T-cell (primary cell): ENCODE measurements at regions of chr5 and their contacts with region 1.

Region 1: DNA sequence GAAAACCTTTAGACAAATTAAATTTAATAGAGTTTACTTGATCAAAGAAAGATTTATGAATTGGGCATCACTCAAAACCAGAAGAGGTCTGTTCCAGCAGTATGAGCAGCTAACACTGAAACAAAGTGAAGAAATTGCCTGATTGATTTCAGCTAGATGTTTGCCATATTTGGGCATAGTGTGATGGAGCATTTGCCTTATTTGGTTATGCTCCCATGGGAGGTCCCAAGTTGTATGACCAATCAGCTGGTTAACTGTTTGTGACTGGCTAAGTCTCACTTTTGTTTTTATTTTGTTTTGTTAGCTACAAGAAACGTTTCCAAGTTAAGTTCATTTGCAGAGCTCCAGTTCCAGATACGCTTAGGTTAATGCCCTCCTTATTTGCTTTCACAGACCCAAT is 53.3 kb upstream of the LMNB1 start:
- DNase-seq: no peak
- ATAC-seq: no peak
- H3K4me3 ChIP-seq: no peak overlapping the region
- H3K4me3 Mint-ChIP-seq: no peak overlapping the region
- H3K27ac ChIP-seq: no peak overlapping the region
- H3K27ac Mint-ChIP-seq: no peak overlapping the region
- H3K4me1 ChIP-seq: no peaks in the 10 kb centered on the region
- H3K4me1 Mint-ChIP-seq: no peaks in the 10 kb centered on the region
- H3K27me3 ChIP-seq: no peaks in the 10 kb centered on the region
- H3K27me3 Mint-ChIP-seq: no peaks in the 10 kb centered on the region

Region 2: GRCh38 chr5:125970631-125971307 is 752.9 kb before region 1 on chr5:
- CTCF ChIA-PET with region 1: no interaction called
- POLR2A ChIA-PET with region 1: no interaction called
- DNase-seq: no peak
- ATAC-seq: no peak
- H3K4me3 ChIP-seq: no peak overlapping the region
- H3K4me3 Mint-ChIP-seq: no peak overlapping the region
- H3K27ac ChIP-seq: no peak overlapping the region
- H3K27ac Mint-ChIP-seq: no peak overlapping the region
- H3K4me1 ChIP-seq: no peaks in the 10 kb centered on the region
- H3K4me1 Mint-ChIP-seq: no peaks in the 10 kb centered on the region
- H3K27me3 ChIP-seq: no peaks in the 10 kb centered on the region
- H3K27me3 Mint-ChIP-seq: no peaks in the 10 kb centered on the region

Region 3: DNA sequence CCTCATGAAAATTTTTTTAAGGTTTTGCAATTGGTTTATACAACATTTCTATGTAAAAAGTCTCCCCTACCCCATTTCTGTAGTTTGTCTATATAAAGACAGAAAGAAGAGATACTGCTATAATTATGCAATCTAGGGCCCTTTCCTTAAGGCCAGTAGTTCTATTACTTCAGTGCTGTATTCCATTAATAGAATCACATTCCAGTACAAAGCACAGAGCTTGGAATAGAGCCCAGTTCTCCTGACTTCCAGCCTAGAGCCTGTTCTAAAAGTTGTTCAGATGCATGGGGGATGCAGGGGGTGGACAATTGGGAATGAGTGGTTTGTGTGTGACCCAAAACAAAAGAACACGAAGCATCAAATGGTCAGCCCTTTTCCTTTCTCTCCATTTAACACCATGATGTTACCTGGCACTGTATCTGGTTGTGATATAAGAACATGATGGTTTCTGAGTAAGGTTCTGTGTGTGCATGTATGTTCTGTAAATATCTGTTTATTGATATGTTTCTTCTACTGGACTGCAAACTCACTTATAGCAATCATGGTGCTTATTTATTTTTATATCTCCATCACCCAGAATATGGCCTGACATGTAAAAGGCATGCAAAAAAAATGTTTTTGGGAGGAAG is 308.7 kb before region 1 on chr5:
- CTCF ChIA-PET with region 1: no interaction called
- POLR2A ChIA-PET with region 1: no interaction called
- DNase-seq: no peak
- ATAC-seq: no peak
- H3K4me3 ChIP-seq: no peak overlapping the region
- H3K4me3 Mint-ChIP-seq: no peak overlapping the region
- H3K27ac ChIP-seq: no peak overlapping the region
- H3K27ac Mint-ChIP-seq: no peak overlapping the region
- H3K4me1 ChIP-seq: no peaks in the 10 kb centered on the region
- H3K4me1 Mint-ChIP-seq: peaks cover 0 to 2% (median 0%) of the 10 kb centered on the region in 3 donors
- H3K27me3 ChIP-seq: peaks cover 0 to 4% of the 10 kb centered on the region in 2 experiments
- H3K27me3 Mint-ChIP-seq: peaks cover 6 to 33% of the 10 kb centered on the region in 2 donors

Region 4: GRCh38 chr5:126525630-126526245 is 197.9 kb before region 1 on chr5:
- CTCF ChIA-PET with region 1: no interaction called
- POLR2A ChIA-PET with region 1: no interaction called
- DNase-seq: no peak
- ATAC-seq: no peak
- H3K4me3 ChIP-seq: no peak overlapping the region
- H3K4me3 Mint-ChIP-seq: no peak overlapping the region
- H3K27ac ChIP-seq: no peak overlapping the region
- H3K27ac Mint-ChIP-seq: no peak overlapping the region
- H3K4me1 ChIP-seq: no peaks in the 10 kb centered on the region
- H3K4me1 Mint-ChIP-seq: peaks cover 0 to 2% (median 0%) of the 10 kb centered on the region in 3 donors
- H3K27me3 ChIP-seq: peaks cover 0 to 5% of the 10 kb centered on the region in 2 experiments
- H3K27me3 Mint-ChIP-seq: no peaks in the 10 kb centered on the region

Region 5: GRCh38 chr5:126741361-126741760 is 17.7 kb after region 1 on chr5:
- CTCF ChIA-PET with region 1: no interaction called
- POLR2A ChIA-PET with region 1: interaction called, 3 to 12 read pairs
- DNase-seq: no peak
- ATAC-seq: no peak
- H3K4me3 ChIP-seq: no peak overlapping the region
- H3K4me3 Mint-ChIP-seq: no peak overlapping the region
- H3K27ac ChIP-seq: no peak overlapping the region
- H3K27ac Mint-ChIP-seq: no peak overlapping the region
- H3K4me1 ChIP-seq: no peaks in the 10 kb centered on the region
- H3K4me1 Mint-ChIP-seq: peaks cover 0 to 4% (median 3%) of the 10 kb centered on the region in 3 donors
- H3K27me3 ChIP-seq: no peaks in the 10 kb centered on the region
- H3K27me3 Mint-ChIP-seq: peaks cover 4% of the 10 kb centered on the region in 2 donors